CD4-positive, alpha-beta T cell (primary cell): ENCODE measurements at regions of chr2 and their contacts with region 1.

Region 1: GRCh38 chr2:70340921-70341765 is 39.3 kb upstream of the FAM136A start:
- DNase-seq: peak; percentile 2 to 71 (median 16)
- ATAC-seq: peak; percentile 57
- H3K4me3 ChIP-seq: no peak overlapping the region
- H3K4me3 Mint-ChIP-seq: no peak overlapping the region
- H3K27ac ChIP-seq: no peak overlapping the region
- H3K27ac Mint-ChIP-seq: no peak overlapping the region
- H3K4me1 ChIP-seq: peaks cover 7% of the 10 kb centered on the region
- H3K4me1 Mint-ChIP-seq: peaks cover 9% of the 10 kb centered on the region
- H3K27me3 ChIP-seq: no peaks in the 10 kb centered on the region
- H3K27me3 Mint-ChIP-seq: no peaks in the 10 kb centered on the region
- CTCF ChIP-seq: peak; percentile 93

Region 2: DNA sequence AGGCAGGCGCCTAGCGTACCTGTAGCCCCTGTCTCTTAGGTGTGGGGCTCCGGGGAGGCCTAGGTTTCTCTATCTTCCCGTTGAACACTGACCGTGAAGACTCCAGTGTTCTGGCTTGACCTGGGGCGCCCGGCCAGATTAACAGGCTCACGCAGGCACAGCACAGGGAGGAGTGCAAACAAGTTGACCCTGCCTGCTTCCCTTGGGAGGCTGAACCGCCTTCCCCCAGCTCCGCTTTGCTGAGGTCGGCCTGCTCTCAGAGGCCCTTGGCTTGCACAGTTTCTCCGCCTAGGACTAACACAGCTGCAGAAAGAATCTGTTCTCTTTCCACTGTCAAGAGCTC is 82.6 kb before region 1 on chr2:
- CTCF ChIA-PET with region 1: no interaction called
- POLR2A ChIA-PET with region 1: no interaction called
- intact Hi-C with region 1: no loop called
- DNase-seq: peak in 3 of 14 experiments; percentile 2 to 37 (median 11)
- ATAC-seq: no peak
- H3K4me3 ChIP-seq: peak overlapping the region; percentile 73
- H3K4me3 Mint-ChIP-seq: peak overlapping the region; percentile 95
- H3K27ac ChIP-seq: peak overlapping the region in 1 of 2 donors; percentile 45
- H3K27ac Mint-ChIP-seq: peak overlapping the region; percentile 86
- H3K4me1 ChIP-seq: peaks cover 20% of the 10 kb centered on the region
- H3K4me1 Mint-ChIP-seq: peaks cover 42% of the 10 kb centered on the region
- H3K27me3 ChIP-seq: no peaks in the 10 kb centered on the region
- H3K27me3 Mint-ChIP-seq: no peaks in the 10 kb centered on the region
- CTCF ChIP-seq: no peak

Region 3: DNA sequence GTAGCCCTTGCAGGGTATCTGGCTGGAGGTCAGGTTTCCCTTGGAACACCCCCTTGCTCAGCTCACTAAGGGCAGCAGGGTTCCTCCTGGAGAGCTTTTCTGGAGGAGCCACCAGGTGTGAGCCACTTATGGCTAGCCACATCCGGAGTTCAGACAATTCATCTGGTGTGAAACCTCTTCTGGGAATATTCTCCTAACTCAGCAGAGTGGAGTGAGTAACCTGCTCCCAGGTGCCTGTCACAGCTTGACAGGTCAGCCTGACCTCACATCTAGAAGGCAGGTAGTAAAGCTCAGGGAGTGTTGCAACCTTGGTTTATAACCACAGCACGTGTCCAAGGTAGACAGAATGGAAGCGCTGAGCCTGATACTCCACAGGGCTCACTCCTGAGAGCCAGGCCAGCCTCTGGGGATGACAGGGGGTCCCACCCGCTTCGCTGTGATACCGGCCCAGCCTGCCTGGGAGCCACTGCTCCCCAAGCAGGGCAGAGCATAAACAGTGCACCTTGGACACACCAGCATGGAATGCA is 275.1 kb after region 1 on chr2:
- CTCF ChIA-PET with region 1: interaction called, 18 read pairs
- POLR2A ChIA-PET with region 1: no interaction called
- intact Hi-C with region 1: loop called (anchors 1 kb)
- DNase-seq: no peak
- ATAC-seq: no peak
- H3K4me3 ChIP-seq: no peak overlapping the region
- H3K4me3 Mint-ChIP-seq: no peak overlapping the region
- H3K27ac ChIP-seq: no peak overlapping the region
- H3K27ac Mint-ChIP-seq: no peak overlapping the region
- H3K4me1 ChIP-seq: no peaks in the 10 kb centered on the region
- H3K4me1 Mint-ChIP-seq: no peaks in the 10 kb centered on the region
- H3K27me3 ChIP-seq: peaks cover 0 to under 1% of the 10 kb centered on the region in 2 experiments
- H3K27me3 Mint-ChIP-seq: no peaks in the 10 kb centered on the region
- CTCF ChIP-seq: no peak

Region 4: GRCh38 chr2:70647873-70648481 is 306.8 kb after region 1 on chr2:
- CTCF ChIA-PET with region 1: no interaction called
- POLR2A ChIA-PET with region 1: interaction called, 4 read pairs
- intact Hi-C with region 1: loop called (anchors 1 kb)
- DNase-seq: peak; percentile 63 to 85 (median 72)
- ATAC-seq: peak; percentile 91
- H3K4me3 ChIP-seq: no peak overlapping the region
- H3K4me3 Mint-ChIP-seq: no peak overlapping the region
- H3K27ac ChIP-seq: no peak overlapping the region
- H3K27ac Mint-ChIP-seq: no peak overlapping the region
- H3K4me1 ChIP-seq: no peaks in the 10 kb centered on the region
- H3K4me1 Mint-ChIP-seq: peaks cover 5% of the 10 kb centered on the region
- H3K27me3 ChIP-seq: peaks cover 0 to 2% of the 10 kb centered on the region in 2 experiments
- H3K27me3 Mint-ChIP-seq: peaks cover 4% of the 10 kb centered on the region
- CTCF ChIP-seq: peak; percentile 96